ENCODE measurements at regions of chr22 and their contacts with region 1.

Region 1: GRCh38 chr22:22060200-22061084 is 77.9 kb upstream of the TOP3B start:
- DNase-seq: peak; percentile 39
- H3K4me3 ChIP-seq: no peak overlapping the region
- H3K27ac ChIP-seq: no peak overlapping the region
- H3K4me1 ChIP-seq: peaks cover 4% of the 10 kb centered on the region
- H3K27me3 ChIP-seq: no peaks in the 10 kb centered on the region
- CTCF ChIP-seq: peak; percentile 80 to 99

Region 2: DNA sequence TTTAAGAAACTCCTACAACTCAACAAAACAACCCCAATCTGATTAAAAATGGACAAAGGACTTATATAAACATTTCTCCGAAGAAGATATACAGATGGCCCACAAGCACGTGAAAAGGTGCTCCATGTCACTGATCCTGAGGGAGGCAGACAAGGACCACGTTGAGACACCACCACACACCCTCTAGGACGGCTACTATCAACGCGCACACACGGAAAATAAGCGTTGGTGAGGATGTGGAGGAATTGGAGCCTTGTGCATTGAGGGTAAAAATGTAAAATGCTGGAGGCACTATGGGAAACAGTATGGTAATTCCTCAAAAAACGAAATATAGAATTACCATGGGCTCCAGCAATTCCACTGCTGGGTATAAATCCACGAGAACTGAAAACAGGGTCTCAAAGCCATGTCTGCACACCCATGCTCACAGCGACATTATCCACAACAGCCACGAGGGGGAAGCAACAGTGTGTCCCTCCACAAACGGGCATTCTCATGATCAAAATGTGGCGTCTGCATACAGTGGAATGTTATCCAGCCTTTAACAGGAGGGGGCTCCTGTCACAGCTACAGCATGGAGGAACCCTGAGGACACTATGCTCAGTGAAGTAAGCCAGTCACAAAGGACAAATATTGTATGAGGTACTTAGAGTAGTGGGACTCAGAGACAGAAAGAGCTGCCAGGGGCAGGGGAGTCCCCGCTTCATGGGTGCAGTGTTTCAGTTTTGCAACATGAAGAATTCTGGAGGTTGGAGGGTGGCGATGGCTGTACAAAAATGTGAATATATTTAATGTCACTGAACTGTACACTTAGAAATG is 347.3 kb before region 1 on chr22:
- CTCF ChIA-PET with region 1: no interaction called
- dilution Hi-C with region 1: no loop called
- in situ Hi-C with region 1: no loop called
- intact Hi-C with region 1: loop called (anchors 2 kb)
- DNase-seq: peak; percentile 59
- H3K4me3 ChIP-seq: no peak overlapping the region
- H3K27ac ChIP-seq: no peak overlapping the region
- H3K4me1 ChIP-seq: peaks cover 3% of the 10 kb centered on the region
- H3K27me3 ChIP-seq: no peaks in the 10 kb centered on the region
- CTCF ChIP-seq: peak; percentile 74 to 77

Region 3: GRCh38 chr22:21867528-21868266 is 192.7 kb before region 1 on chr22 and contains the start of gene MAPK1:
- CTCF ChIA-PET with region 1: no interaction called
- dilution Hi-C with region 1: no loop called
- in situ Hi-C with region 1: no loop called
- intact Hi-C with region 1: no loop called
- DNase-seq: peak; percentile 83
- H3K4me3 ChIP-seq: peak within 1 kb of the TSS; percentile 81 to 99 (median 88)
- H3K27ac ChIP-seq: peak within 1 kb of the TSS; percentile 86
- H3K4me1 ChIP-seq: peaks cover 25% of the 10 kb centered on the region
- H3K27me3 ChIP-seq: no peaks in the 10 kb centered on the region
- CTCF ChIP-seq: peak in 1 of 2 donors; percentile 38
- total RNA-seq, gene MAPK1: 106 to 147 TPM

Region 4: GRCh38 chr22:22110548-22111266 is 50.3 kb after region 1 on chr22:
- CTCF ChIA-PET with region 1: interaction called, 12 read pairs
- dilution Hi-C with region 1: no loop called
- in situ Hi-C with region 1: no loop called
- intact Hi-C with region 1: loop called (anchors 1 kb)
- DNase-seq: peak; percentile 93
- H3K4me3 ChIP-seq: no peak overlapping the region
- H3K27ac ChIP-seq: peak overlapping the region; percentile 82
- H3K4me1 ChIP-seq: peaks cover 18% of the 10 kb centered on the region
- H3K27me3 ChIP-seq: no peaks in the 10 kb centered on the region
- CTCF ChIP-seq: peak; percentile 79 to 87

Region 5: DNA sequence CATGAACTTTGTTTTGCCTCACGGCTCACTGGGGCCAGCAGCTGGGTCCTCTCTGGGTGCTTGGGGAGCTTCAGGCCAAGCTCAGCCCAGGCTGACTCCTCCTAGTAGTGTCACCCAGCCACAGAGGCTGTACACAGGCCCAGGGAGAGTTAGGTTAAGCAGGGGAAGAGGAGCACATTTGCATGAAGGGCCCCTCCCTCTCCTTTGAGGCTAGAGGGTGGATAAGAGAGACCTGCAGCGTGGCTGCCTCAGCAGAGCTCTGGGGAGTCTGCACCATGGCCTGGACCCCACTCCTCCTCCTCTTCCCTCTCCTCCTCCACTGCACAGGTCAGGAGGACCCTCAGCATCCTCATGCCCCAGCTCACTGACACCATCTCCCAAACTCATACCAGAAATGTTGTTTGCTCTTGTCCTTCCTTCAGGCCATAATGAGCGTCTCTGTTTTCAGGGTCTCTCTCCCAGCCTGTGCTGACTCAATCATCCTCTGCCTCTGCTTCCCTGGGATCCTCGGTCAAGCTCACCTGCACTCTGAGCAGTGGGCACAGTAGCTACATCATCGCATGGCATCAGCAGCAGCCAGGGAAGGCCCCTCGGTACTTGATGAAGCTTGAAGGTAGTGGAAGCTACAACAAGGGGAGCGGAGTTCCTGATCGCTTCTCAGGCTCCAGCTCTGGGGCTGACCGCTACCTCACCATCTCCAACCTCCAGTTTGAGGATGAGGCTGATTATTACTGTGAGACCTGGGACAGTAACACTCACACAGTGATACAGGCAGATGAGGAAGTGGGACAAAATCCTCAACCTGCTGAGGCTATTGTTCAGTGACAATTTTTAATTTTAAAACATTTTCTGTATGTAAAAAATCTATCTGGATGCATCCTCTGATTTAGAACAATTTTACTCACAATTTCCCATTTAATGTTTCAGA is 101.7 kb after region 1 on chr22:
- CTCF ChIA-PET with region 1: no interaction called
- dilution Hi-C with region 1: loop called (anchors 5 kb)
- in situ Hi-C with region 1: no loop called
- intact Hi-C with region 1: no loop called
- DNase-seq: no peak
- H3K4me3 ChIP-seq: no peak overlapping the region
- H3K27ac ChIP-seq: no peak overlapping the region
- H3K4me1 ChIP-seq: no peaks in the 10 kb centered on the region
- H3K27me3 ChIP-seq: no peaks in the 10 kb centered on the region
- CTCF ChIP-seq: no peak

Region 6: DNA sequence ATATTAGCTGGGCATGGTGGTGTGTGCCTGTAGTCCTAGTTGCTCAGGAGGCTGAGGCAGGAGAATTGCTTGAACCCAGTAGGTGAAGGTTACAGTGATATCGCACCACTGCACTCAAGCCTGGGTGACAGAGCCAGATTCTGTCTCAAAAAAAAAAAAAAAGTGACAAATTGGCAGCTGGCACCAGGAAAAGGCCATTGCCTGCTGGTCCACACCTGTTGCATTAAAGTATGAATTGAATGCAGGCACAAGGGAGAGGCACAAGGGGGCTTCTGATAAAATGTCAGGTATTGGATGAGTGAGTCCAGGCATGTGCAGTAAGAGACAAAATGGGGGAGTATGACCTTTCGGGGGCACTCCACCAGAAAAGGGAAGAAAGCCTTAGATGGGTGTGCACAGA is 1662.3 kb after region 1 on chr22:
- CTCF ChIA-PET with region 1: interaction called, 11 read pairs
- dilution Hi-C with region 1: no loop called
- in situ Hi-C with region 1: no loop called
- intact Hi-C with region 1: no loop called
- DNase-seq: no peak
- H3K4me3 ChIP-seq: no peak overlapping the region
- H3K27ac ChIP-seq: no peak overlapping the region
- H3K4me1 ChIP-seq: no peaks in the 10 kb centered on the region
- H3K27me3 ChIP-seq: no peaks in the 10 kb centered on the region
- CTCF ChIP-seq: no peak